ENCODE measurements at regions of chr15 and their contacts with region 1.

Region 1: GRCh38 chr15:73873889-73874511 is 636 bp downstream of the TBC1D21 start:
- DNase-seq: peak; percentile 39 to 42
- H3K4me3 ChIP-seq: no peak overlapping the region
- H3K4me3 Mint-ChIP-seq: no peak overlapping the region
- H3K27ac Mint-ChIP-seq: no peak overlapping the region
- H3K4me1 ChIP-seq: peaks cover 14% of the 10 kb centered on the region
- H3K4me1 Mint-ChIP-seq: peaks cover 5% of the 10 kb centered on the region
- H3K27me3 ChIP-seq: no peaks in the 10 kb centered on the region; the same call in 1 of the 2 replicates
- H3K27me3 Mint-ChIP-seq: peaks cover 8% of the 10 kb centered on the region
- CTCF ChIP-seq: peak; percentile 61 to 74

Region 2: GRCh38 chr15:73908030-73908821 is 34.2 kb after region 1 on chr15:
- CTCF ChIA-PET with region 1: interaction called, 31 read pairs
- POLR2A ChIA-PET with region 1: no interaction called
- intact Hi-C with region 1: loop called (anchors 1 kb)
- DNase-seq: peak; percentile 70 to 83
- H3K4me3 ChIP-seq: no peak overlapping the region
- H3K4me3 Mint-ChIP-seq: no peak overlapping the region
- H3K27ac Mint-ChIP-seq: no peak overlapping the region
- H3K4me1 ChIP-seq: no peaks in the 10 kb centered on the region
- H3K4me1 Mint-ChIP-seq: no peaks in the 10 kb centered on the region
- H3K27me3 ChIP-seq: no peaks in the 10 kb centered on the region
- H3K27me3 Mint-ChIP-seq: peaks cover 5% of the 10 kb centered on the region
- CTCF ChIP-seq: peak; percentile 91 to 92

Region 3: DNA sequence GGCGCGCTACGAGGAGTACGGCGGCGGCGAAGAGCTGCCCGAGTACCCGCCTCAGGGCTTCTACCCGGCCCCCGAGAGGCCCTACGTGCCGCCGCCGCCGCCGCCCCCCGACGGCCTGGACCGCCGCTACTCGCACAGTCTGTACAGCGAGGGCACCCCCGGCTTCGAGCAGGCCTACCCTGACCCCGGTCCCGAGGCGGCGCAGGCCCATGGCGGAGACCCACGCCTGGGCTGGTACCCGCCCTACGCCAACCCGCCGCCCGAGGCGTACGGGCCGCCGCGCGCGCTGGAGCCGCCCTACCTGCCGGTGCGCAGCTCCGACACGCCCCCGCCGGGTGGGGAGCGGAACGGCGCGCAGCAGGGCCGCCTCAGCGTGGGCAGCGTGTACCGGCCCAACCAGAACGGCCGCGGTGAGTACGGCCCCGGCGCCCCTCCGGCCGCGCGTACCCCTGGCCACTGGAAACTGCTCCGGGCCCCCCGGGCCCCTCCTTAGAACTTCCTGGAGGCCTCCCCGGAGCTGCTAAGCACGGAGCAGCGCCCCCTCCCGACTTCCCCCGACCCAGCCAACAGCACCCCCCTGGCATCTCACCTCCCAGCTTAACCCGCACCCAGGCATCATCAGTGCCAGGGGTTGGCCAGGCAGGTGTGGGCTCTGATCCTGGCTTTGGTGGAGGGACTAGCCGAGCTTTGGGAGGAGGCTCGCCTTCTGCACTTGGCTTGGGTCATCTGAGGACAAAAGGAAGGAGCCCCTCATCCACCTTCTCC is 53.7 kb after region 1 on chr15:
- CTCF ChIA-PET with region 1: interaction called, 14 read pairs
- POLR2A ChIA-PET with region 1: no interaction called
- intact Hi-C with region 1: no loop called
- DNase-seq: peak; percentile 53 to 82
- H3K4me3 ChIP-seq: peak overlapping the region; percentile 55
- H3K4me3 Mint-ChIP-seq: peak overlapping the region; percentile 73
- H3K27ac Mint-ChIP-seq: peak overlapping the region; percentile 73
- H3K4me1 ChIP-seq: peaks cover 6% of the 10 kb centered on the region
- H3K4me1 Mint-ChIP-seq: no peaks in the 10 kb centered on the region
- H3K27me3 ChIP-seq: no peaks in the 10 kb centered on the region
- H3K27me3 Mint-ChIP-seq: peaks cover 10% of the 10 kb centered on the region
- CTCF ChIP-seq: peak; percentile 46 to 58

Measured in Caco-2 (cell line).